GM10248 (cell line): ENCODE measurements at regions of chr9 and their contacts with region 1.

Region 1: GRCh38 chr9:133553978-133554713 is 19.6 kb downstream of the ADAMTSL2 start:
- DNase-seq: no peak
- CTCF ChIP-seq: no peak

Region 2: GRCh38 chr9:133539991-133540697 is 14.0 kb before region 1 on chr9:
- CTCF ChIA-PET with region 1: interaction called, 13 read pairs
- POLR2A ChIA-PET with region 1: no interaction called
- DNase-seq: no peak
- CTCF ChIP-seq: no peak

Region 3: GRCh38 chr9:133589454-133590227 is 35.5 kb after region 1 on chr9:
- CTCF ChIA-PET with region 1: no interaction called
- POLR2A ChIA-PET with region 1: no interaction called
- DNase-seq: no peak
- CTCF ChIP-seq: peak; percentile 38